ENCODE measurements at regions of chr17 and their contacts with region 1.

Region 1: GRCh38 chr17:75393523-75394331 is 11.8 kb downstream of the GRB2 start:
- DNase-seq: peak; percentile 97

Region 2: DNA sequence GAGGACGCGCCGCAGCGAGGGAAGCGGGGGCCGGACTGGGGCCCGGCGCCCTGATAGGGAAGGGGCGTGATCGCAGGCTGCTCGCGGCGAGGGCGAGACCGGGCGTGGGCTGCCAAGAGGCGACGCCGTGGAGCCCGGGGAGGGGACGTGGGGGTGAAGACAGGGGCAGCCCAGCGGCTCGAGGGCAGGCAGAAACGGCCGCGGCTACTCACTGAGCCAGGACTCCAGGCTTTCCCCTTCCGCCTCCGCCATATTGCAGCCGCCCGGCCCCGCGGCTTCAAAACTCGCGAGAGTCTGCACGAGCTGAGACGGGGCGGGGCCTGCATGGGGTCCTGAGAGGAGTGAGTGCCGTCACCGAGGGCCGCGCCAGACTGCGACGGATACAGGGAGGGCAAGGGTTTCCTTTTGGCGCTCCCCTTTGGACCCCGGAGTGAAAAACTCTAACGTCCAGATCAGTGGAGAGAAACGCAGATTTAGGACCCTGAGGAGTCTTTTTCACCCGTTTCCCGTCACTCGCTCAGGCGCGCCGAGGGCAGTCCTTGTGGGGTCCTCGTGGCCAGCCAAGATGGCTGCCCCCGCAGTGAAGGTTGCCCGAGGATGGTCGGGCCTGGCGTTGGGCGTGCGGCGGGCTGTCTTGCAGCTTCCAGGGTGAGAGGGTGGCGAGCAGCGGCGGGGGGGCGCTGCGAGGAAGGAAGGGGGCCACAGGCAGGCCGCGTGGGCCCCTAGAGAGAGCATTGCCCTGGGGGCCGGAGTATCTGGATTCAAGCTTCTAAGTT is 132.2 kb before region 1 on chr17 and contains the starts of genes GGA3 and MRPS7:
- CTCF ChIA-PET with region 1: no interaction called
- POLR2A ChIA-PET with region 1: interaction called, 11 read pairs
- DNase-seq: peak; percentile 96

Region 3: DNA sequence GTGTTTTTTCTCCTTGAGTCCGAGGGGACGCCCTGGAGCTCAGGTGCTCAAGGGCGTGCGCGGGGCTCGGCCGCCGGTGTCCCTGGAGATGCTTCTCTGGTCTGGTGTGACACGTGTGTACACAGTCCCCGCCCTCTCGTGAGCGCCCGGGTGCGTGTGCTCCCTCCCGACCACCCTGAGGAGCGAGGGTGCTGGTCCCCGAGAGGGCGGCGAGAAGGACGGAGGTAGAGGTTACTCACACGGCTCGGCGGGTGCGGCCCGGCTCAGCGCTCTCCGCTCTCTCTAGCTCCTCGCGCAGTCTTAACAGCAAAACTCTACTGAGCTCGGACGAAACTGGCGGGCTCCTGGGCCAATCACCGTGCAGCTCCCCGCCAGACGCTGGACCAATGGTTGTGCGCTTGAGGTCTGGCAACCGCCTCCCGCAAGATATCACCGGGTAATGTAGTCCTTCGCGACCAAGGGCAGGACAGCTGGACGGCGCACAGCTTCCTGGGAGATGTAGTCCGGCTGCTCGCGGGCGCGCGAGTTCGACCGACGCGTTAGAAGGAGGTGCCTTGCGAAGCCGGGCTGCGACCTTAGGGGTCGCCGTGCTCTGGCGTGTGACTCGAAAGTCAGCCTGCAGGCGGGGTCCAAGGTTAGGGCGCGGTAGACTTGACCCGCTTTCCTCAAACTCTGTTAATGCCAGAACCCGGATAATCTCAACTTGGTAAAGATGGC is 104.5 kb before region 1 on chr17 and contains the start of gene SLC25A19:
- CTCF ChIA-PET with region 1: no interaction called
- POLR2A ChIA-PET with region 1: interaction called, 30 read pairs
- DNase-seq: peak; percentile 99

Region 4: DNA sequence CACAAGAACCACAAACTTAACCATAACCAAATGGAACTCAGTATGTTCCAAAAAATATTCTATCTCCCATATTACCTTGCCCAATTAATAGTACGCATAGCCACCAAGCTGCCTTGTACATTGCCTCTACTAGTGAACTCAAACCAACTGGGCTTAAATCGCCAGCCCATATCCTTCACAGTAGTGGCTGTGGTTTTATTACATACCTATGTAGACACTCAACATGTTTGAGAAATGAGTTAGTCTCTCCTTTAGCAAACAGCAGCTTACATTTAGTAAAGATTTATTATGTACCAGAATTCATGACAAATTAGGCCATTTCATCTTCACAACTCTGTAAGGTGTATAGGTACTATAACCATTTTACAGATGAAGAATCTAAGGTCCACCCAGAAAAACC is 29.6 kb before region 1 on chr17:
- CTCF ChIA-PET with region 1: interaction called, 3 read pairs
- POLR2A ChIA-PET with region 1: interaction called, 16 read pairs
- DNase-seq: no peak

Region 5: DNA sequence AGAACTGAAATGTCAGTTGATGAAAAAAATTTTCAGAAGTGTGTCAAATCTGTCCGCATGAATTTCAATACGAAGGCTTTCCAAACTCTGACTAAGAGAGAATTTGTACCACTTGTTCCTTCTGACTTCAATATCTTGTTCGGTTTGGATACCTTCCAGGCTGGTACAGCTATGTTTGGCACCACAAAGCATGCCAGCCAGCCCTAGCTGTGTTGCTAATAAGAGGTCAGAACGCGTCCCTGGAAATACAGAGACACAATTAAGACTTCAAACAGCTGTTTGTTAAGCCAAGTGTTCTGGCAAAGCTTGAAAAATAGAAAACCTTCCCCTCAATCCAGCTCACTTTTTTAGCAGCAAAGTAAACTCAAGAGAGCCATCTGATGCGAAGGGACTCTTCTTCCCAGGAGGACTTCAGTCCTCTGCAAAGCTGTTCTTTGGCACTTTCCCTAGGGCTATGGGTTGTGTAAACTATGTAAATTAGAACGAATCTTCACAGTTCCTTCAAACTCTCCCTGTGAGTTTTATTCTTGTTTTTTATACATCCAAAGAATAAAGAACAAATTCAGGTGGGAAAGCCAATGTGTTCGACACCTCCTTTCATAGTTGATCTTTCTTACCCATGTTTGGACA is 23.3 kb before region 1 on chr17:
- CTCF ChIA-PET with region 1: interaction called, 3 read pairs
- POLR2A ChIA-PET with region 1: interaction called, 16 read pairs
- DNase-seq: no peak

Region 6: GRCh38 chr17:75405365-75406221 is 11.9 kb after region 1 on chr17 and contains the start of gene GRB2:
- CTCF ChIA-PET with region 1: interaction called, 3 read pairs
- POLR2A ChIA-PET with region 1: interaction called, 39 read pairs
- DNase-seq: peak; percentile 99

Region 7: DNA sequence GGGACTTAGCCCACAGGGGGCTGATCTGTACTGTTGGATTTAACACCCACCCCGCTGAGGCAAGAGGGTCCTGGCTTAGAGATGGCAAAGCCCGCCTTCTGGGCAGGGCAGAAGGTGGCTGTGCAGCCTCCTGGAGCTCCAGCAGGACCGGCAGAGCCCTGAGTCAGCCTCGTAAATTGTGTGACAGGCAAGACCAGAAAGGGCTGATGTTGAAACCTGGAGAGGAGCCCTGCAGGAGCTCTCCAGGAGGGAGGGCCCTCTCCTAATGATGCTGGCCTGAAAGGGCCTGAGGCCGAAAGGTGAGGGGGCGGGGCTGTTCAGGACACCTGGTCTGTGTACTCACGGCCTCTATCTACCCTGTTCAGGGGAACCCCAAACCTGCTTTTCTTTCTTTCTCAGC is 171.3 kb after region 1 on chr17:
- CTCF ChIA-PET with region 1: no interaction called
- POLR2A ChIA-PET with region 1: no interaction called
- DNase-seq: no peak